Psoas muscle (tissue), 8 donors: ENCODE measurements at regions of chr20 and their contacts with region 1.

Region 1: DNA sequence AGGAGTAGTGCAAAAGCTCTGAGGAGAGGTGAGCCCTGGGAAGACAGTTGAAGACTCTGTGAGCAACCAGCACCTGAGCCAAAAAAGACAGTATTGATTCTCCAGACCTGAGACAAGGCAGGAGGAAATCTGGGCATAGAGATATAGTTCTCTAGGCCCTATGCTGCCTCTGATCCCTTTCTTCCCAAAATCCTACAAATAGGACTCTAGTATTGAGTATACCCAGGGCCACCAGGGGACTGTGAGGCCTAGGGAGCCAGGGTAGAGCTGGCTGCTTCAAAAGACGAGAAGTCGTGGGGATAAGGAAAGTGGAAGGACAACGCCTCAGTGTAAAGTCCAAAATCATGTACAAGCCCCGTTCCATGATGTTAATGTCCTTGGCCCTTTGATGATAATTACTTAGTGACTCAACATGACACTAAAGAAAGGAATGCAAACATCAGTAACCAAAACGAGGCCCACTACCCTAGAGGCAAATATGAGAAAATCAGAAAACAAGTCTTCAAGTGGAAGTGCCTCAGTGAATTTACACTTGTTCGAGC is 197.3 kb upstream of the PROKR2 start:
- DNase-seq: no peak
- ATAC-seq: no peak
- H3K4me3 ChIP-seq: no peak overlapping the region
- H3K27ac ChIP-seq: no peak overlapping the region
- H3K4me1 ChIP-seq: no peaks in the 10 kb centered on the region
- H3K27me3 ChIP-seq: no peaks in the 10 kb centered on the region
- CTCF ChIP-seq: no peak

Region 2: GRCh38 chr20:3820048-3820900 is 1693.8 kb before region 1 on chr20 and contains the start of gene AP5S1:
- intact Hi-C with region 1: no loop called
- DNase-seq: peak; percentile 97 to 98
- ATAC-seq: peak; percentile 89 to 92 (median 90)
- H3K4me3 ChIP-seq: peak within 1 kb of the TSS; percentile 83
- H3K27ac ChIP-seq: peak within 1 kb of the TSS; percentile 96
- H3K4me1 ChIP-seq: peaks cover 13% of the 10 kb centered on the region
- H3K27me3 ChIP-seq: no peaks in the 10 kb centered on the region
- CTCF ChIP-seq: peak; percentile 99
- total RNA-seq, gene AP5S1: 11.8 to 17.5 (median 12.1) TPM

Region 3: DNA sequence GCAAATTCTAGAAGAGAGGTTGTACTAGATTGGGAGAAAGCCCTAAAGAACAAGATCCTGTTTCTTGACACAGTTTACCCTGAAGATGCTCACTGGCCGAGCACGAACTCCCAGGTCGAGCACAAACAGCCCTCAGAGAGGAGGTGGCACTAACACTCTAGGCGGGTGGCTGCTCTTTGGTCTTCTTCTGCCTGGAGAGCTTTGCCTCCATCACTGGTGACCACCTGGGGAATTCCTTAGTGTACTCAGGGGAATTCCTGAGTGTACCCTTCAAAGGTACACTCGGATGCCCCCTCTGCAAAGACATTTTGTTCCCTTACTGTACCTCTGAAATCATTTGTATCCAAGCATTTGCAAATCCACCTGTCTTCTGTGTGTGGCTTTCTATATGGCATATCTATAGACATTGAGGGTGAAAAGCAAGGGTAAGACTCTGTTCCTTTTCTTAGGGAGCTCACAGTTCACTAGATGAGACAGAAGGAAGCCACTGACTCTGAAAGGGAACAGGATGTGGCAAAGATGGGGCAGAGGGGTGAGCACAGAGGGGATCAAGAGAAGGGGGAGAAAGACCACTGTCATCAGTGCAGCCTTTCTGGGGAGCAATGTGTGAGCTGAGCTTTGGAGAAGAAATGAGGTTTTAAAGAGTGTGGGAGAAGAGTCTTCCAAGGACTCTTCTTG is 27.5 kb before region 1 on chr20:
- intact Hi-C with region 1: no loop called
- DNase-seq: no peak
- ATAC-seq: no peak
- H3K4me3 ChIP-seq: no peak overlapping the region
- H3K27ac ChIP-seq: no peak overlapping the region
- H3K4me1 ChIP-seq: no peaks in the 10 kb centered on the region
- H3K27me3 ChIP-seq: no peaks in the 10 kb centered on the region
- CTCF ChIP-seq: no peak

Region 4: GRCh38 chr20:6067763-6068318 is 553.8 kb after region 1 on chr20:
- intact Hi-C with region 1: loop called in 1 of 2 experiments (anchors 5 kb)
- DNase-seq: no peak
- ATAC-seq: no peak
- H3K4me3 ChIP-seq: no peak overlapping the region
- H3K27ac ChIP-seq: no peak overlapping the region
- H3K4me1 ChIP-seq: no peaks in the 10 kb centered on the region
- H3K27me3 ChIP-seq: no peaks in the 10 kb centered on the region
- CTCF ChIP-seq: no peak